Activated T-helper 2 cell treated with anti-CD3 and anti-CD28 coated beads, Interferon-gamma antibody, Interleukin-2, Interleukin-4, amounts not matched to agents 10 μg/mL and 5 μg/mL and 100 μg/mL, durations not matched to agents 14 hours and 24 hours and 36 hours (primary cell): ENCODE measurements at regions of chr12 and their contacts with region 1.

Region 1: DNA sequence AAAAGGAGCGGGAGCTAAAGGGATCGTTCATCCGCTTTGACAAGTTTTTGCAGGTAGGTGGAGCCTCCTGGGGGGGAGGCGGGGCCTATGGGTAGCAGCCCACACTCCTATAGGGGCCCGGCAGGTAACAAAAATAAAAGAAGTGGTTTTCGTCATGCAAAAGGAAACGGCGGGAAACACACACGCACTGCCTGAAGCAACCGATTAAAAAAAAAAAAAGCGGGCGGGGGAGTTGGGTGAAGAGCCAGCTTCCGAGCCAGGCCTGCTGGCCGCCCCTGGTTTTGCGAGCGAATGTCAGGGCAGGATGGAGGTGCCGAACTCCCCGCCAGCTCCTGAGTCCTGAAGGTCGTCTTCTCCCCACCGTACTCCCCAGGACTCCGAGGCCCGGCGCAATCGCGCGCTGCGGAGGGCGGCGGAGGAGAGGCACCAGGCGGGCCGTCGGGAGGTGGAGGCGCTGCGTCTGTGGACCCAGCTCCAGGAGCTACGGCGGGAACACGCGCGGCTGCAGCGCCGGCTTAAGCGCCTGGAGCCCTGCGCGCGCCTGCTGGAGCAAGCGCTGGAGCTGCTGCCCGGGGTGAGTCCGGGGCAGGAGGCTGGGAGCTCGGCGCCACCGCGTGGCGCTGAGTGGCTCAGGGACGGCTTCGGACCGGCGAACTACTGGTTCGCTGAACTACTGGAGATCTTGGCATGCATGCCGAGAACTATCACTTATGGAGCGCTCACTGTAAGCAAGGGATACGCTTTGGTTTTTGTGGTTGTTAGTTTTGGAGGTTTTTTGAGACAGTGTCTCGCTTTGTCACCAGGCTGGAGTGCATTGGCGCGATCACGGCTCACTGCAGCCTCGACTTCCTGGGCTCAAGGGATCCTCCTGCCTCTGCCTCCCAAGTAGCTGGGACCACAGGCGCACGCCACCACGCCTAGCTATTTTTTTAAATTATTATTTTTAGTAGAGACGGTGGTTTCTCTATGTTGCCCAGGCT is 3.6 kb downstream of the CFAP73 start:
- DNase-seq: peak; percentile 36
- H3K4me3 Mint-ChIP-seq: peak overlapping the region; percentile 74
- H3K27ac Mint-ChIP-seq: no peak overlapping the region
- H3K4me1 Mint-ChIP-seq: peaks cover 11% of the 10 kb centered on the region
- H3K27me3 Mint-ChIP-seq: peaks cover 24% of the 10 kb centered on the region

Region 2: DNA sequence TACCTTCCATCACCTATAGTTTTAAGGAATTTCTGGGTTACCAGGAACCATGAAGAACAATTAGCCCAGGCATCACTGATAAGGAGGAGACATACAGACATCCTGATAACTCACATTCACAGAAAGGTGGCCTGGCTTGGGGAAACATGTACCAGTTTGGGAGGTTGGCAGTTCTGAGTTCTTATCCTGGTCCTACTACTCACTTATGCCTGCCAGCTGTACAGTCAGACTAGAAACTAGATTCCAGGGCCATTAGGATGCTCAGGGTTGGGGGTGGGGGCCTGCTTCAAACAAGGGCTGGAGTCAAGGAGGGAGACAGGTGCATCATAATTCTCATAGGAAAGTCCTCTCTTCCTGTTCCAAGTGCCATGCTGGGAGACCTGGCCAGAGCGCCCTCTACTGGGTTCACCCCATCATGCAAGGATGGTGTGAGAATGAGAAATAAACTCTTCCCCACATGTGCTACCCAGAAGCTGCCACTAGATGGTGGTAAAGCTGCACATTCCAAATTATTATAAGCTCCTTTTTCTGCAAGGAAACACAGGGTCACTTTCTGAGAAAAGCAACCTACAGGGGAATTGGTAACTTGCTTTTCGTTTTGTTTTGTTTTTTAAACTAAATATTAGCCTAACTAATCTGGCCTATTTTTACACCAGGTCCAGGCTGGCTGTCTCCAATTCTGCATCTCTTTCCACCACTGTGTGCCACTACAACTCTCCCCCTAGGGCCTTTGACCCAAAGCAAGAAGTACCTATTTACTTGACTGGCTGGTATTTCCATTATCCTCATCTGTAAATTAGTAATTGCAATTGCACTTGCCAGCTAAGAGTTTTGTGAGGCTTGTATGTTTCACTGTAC is 160.4 kb before region 1 on chr12:
- intact Hi-C with region 1: loop called (anchors 5 kb)
- DNase-seq: peak; percentile 47
- H3K4me3 Mint-ChIP-seq: no peak overlapping the region
- H3K27ac Mint-ChIP-seq: peak overlapping the region; percentile 21
- H3K4me1 Mint-ChIP-seq: peaks cover 15% of the 10 kb centered on the region
- H3K27me3 Mint-ChIP-seq: no peaks in the 10 kb centered on the region

Region 3: GRCh38 chr12:113048716-113049127 is 104.4 kb before region 1 on chr12:
- intact Hi-C with region 1: loop called (anchors 2 kb)
- DNase-seq: peak; percentile 24
- H3K4me3 Mint-ChIP-seq: no peak overlapping the region
- H3K27ac Mint-ChIP-seq: no peak overlapping the region
- H3K4me1 Mint-ChIP-seq: no peaks in the 10 kb centered on the region
- H3K27me3 Mint-ChIP-seq: peaks cover 14% of the 10 kb centered on the region

Region 4: DNA sequence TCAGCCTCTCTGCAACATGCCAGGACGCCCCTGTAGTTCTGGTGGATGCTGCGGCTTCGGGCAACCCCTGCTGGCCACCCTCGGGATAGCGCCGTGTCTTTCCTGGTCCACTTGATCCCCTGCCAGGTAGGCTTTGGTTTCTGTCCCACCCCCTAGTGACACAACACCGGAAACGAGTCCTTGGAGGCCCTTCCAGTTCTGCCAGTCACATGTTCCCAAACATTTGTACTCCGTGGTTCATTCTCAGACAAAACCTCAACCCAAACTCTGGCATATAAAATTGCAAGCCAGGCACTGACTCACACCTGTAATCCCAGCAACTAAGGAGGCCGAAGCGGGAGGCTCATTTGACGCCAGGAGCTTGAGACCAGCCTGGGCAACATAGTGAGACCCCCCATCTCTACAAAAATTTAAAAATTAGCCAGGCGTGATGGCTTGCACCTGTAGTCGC is 54.7 kb before region 1 on chr12:
- intact Hi-C with region 1: loop called (anchors 5 kb)
- DNase-seq: peak; percentile 32
- H3K4me3 Mint-ChIP-seq: no peak overlapping the region
- H3K27ac Mint-ChIP-seq: no peak overlapping the region
- H3K4me1 Mint-ChIP-seq: peaks cover 2% of the 10 kb centered on the region
- H3K27me3 Mint-ChIP-seq: no peaks in the 10 kb centered on the region

Region 5: DNA sequence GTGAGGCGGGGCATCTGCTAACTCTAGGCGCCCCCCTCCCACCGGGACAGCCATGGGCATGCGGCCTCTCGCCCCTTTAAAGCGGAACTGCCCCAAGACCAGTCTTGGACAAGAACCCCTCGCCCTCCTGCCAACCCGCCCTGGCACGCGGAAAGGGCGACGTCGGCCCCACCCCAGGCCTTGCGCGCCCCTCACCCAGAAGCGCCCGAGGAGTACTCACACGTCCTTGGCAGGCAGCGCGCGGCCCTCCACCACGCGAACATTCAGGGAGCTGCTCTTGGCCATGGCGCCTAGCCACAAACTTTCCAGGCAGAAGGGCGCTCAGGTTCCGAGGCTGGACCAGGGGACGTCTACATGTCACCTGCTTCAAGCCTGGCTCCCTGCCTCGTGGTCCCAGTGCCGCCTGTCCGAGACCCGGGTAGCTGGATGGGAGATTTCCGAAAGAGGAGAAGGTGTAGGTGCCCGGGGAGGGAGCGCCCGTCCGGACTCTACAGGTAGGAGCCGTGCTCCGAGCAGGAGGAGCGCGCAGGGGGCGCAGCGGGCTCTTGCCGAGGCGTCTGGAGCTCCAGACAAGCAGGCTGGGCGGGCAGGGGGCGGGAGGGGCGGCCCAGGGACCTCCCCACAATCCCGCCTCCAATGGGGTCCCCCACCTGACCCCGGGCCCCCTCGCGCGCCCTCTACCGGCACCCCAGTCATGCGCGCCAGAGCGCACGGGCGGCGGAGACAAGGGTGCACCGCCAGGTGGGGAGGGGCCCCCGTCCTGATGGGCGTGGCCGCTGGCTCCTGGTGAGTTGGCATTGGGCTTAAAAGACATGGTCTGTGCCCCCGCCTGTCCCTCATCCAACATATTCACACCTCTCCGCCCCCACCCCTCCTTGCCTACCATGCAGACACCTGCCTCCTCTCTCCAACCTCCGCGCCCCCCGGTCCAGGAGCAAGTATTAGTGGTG is 17.7 kb before region 1 on chr12 and contains the start of gene RASAL1:
- intact Hi-C with region 1: loop called (anchors 2 kb)
- DNase-seq: peak; percentile 65
- H3K4me3 Mint-ChIP-seq: peak within 1 kb of the TSS; percentile 77
- H3K27ac Mint-ChIP-seq: peak within 1 kb of the TSS; percentile 85
- H3K4me1 Mint-ChIP-seq: peaks cover 15% of the 10 kb centered on the region
- H3K27me3 Mint-ChIP-seq: no peaks in the 10 kb centered on the region
- total RNA-seq, gene RASAL1: 2.2 TPM in 2 replicates

Region 6: GRCh38 chr12:113500782-113501311 is 347.7 kb after region 1 on chr12:
- intact Hi-C with region 1: no loop called
- DNase-seq: no peak
- H3K4me3 Mint-ChIP-seq: no peak overlapping the region
- H3K27ac Mint-ChIP-seq: no peak overlapping the region
- H3K4me1 Mint-ChIP-seq: no peaks in the 10 kb centered on the region
- H3K27me3 Mint-ChIP-seq: peaks cover 10% of the 10 kb centered on the region